ENCODE measurements at regions of chr2 and their contacts with region 1.

Region 1: GRCh38 chr2:118003396-118003824 is 10.5 kb downstream of the CCDC93 start:
- DNase-seq: peak in 1 of 2 donors; percentile 69
- H3K4me3 ChIP-seq: no peak overlapping the region
- H3K27ac ChIP-seq: no peak overlapping the region
- H3K4me1 ChIP-seq: no peaks in the 10 kb centered on the region
- H3K27me3 ChIP-seq: no peaks in the 10 kb centered on the region
- CTCF ChIP-seq: peak; percentile 40 to 81 (median 72)

Region 2: DNA sequence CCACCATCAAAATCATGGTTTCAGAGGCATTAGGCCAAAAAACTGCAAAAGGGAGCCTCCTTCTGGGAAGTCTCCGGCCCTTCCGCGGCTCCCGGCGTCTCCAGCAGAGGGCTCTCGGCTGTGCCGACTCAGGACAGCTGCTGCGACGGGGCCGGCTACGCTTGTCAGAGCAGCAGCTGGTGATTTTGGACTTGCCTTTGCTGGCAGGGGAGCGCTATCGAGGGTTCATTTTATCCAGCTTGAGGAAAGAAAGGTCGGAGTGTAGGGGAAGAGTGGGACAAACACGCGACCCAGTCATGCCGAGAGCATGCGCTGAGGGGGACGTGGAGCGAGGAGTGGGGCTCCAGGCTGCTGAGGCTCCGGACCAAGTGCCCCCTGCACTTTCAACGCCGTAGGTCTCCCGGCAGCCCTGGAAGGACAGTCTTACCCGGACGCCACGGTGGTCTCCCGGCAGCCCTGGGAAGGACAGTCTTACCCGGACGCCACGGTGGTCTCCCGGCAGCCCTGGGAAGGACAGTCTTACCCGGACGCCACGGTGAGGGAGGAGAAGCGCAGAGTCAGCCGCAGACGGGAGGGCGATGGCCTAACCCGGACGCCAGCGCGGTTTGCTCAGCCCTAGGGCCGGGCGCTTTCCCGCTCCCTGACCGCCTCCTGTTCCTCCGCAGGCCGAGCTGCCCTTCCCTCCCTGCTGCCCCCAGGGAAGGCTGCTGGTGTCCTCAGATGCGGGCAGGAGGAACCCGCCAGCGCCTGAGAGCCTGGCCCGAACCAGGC is 167.2 kb before region 1 on chr2:
- intact Hi-C with region 1: loop called (anchors 1 kb)
- DNase-seq: peak; percentile 39 to 90
- H3K4me3 ChIP-seq: peak overlapping the region; percentile 63 to 66
- H3K27ac ChIP-seq: peak overlapping the region; percentile 40 to 57
- H3K4me1 ChIP-seq: peaks cover 0 to 4% of the 10 kb centered on the region in 2 donors
- H3K27me3 ChIP-seq: no peaks in the 10 kb centered on the region
- CTCF ChIP-seq: peak; percentile 50 to 88 (median 86)

Region 3: DNA sequence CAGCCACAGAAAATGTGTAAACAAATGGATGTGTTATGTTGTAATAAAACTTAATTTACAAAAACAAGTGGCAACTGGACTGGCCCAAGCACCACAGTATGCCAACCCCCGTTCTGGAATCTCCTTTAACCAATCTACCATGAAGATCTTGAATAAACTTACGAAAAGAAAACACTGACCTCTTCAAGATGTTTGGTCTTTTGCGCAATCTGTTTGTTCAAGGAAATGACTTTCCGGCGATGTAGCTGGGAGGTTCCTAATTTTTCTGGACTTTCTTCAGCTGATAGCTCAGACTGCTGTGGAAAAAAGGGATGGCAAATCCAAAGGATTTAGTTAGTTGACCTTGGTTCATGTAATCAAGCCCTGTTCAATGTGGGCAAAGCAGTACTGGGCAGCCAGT is 45.2 kb before region 1 on chr2:
- intact Hi-C with region 1: loop called (anchors 5 kb)
- DNase-seq: no peak
- H3K4me3 ChIP-seq: no peak overlapping the region
- H3K27ac ChIP-seq: no peak overlapping the region
- H3K4me1 ChIP-seq: no peaks in the 10 kb centered on the region
- H3K27me3 ChIP-seq: no peaks in the 10 kb centered on the region
- CTCF ChIP-seq: no peak